ENCODE measurements at regions of chr2 and their contacts with region 1.

Region 1: GRCh38 chr2:122236152-122236874 is 480.9 kb downstream of the TSN start:
- DNase-seq: no peak
- ATAC-seq: peak; percentile 66

Region 2: DNA sequence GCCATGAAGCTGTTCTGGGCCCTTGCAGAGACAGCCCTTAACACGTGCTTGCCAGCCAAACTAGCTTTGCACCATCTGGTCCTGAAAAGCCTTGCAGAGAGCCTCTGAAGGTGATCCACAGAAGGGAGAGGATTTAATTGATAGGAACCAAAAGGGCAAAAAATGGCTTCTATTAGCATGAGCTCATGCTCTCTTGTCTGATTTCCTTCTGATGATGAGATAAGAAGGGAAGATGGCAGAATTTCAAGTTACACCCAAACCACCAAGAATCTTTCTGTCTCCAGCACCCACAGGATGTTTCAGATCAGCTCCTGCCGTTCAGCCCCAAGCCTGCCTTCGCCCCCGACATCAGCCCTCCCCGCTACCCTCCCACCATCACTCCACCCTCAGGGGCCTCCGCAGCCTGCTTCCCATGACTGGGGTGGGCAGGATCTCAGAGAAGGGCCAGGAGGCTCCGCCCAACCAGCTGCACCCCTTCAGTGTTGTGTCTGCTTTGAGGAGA is 1524.1 kb before region 1 on chr2:
- intact Hi-C with region 1: no loop called
- DNase-seq: no peak
- ATAC-seq: no peak

Region 3: DNA sequence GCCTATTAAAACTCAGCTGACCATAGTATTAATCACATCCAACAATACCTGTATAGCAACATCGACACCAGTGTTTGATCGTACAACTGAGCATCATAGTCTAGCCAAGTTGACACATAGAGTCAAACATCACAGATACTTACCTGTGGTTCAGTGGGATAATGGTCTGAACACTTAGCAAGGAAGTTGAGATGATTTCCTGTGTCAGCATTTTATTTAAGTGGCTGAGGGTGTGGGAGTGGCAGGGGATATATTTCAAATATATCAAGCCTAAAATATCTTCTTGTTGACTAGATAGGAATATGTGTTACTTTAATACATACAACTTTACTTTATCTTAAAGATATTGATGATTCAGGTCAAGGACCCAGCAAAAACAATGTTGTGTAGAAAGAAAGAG is 557.8 kb after region 1 on chr2:
- intact Hi-C with region 1: loop called (anchors 5 kb)
- DNase-seq: no peak
- ATAC-seq: no peak

Measured in sciatic nerve (tissue), 2 donors.